ENCODE measurements at regions of chr12 and their contacts with region 1.

Region 1: DNA sequence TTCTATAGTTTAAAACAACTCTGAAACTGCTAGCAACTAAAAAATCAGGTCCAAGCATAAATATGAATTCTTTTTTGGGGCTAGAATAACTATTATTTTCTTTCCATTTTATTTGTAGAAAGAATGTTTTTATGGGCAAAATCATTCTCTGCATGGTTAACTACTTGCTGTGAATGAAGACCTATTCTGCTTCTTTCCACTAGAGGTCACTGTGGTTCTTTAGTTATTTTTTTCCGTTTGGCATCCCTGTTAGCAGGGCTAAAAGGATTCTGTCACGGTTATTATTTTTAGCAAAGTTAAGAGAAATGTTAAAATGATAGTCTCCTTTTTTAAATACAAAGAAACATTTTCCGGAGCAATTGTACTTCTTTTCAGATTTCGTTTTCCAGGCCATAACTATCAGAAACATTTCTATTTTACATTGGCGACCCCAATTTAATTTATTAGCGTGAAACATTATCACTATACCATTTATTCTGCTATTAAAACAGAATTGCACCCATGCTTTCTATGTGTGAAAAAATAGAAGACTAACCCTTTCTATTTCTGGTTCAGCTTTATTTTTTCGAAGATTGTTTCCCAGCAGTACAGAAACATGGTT is 404.8 kb downstream of the ATP23 start:
- DNase-seq: no peak
- ATAC-seq: peak; percentile 72; the same call in 1 of the 2 replicates
- H3K4me3 ChIP-seq: no peak overlapping the region
- H3K27ac ChIP-seq: peak overlapping the region; percentile 54; the same call in 1 of the 2 replicates
- H3K4me1 ChIP-seq: no peaks in the 10 kb centered on the region; the same call in 1 of the 2 replicates
- H3K27me3 ChIP-seq: no peaks in the 10 kb centered on the region
- CTCF ChIP-seq: peak; percentile 73; the same call in 1 of the 2 replicates

Region 2: DNA sequence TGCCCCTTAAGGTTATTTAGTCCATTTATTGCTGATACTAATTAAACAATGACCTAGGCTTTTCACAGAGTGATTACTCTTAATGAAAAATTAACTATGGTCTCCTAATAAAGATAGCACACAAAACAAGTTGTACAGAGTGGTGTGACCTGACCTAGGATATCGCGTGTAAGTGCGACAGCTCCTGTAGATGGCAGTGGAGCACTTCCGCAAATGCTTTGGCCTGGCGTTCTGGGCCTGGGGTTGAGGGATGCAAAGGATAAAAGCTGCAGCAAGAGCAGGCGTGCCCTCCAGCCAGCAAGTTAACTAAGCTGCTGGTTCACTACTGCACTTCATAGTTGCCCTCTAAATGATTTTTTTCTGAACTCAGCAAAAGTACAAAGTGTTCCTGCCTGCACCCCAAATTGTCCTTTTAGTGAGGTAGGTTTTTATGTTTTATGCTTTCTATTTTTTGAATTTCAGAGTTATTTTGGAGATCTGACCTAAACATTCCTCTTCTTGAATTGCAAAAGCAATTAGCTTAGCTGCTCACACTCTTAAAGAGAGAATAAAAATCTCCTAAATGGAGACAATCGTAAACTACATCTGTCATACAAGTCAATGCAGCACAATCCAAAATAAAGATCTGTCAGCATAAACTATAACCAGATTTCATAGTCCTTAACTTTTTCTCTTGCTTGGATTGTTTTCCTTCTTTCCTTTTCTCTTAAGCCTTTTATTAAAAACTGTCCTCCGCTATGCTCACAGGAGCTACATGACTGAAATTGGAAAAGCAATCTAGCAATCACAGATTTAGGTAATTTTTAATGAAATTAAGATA is 194.6 kb after region 1 on chr12:
- CTCF ChIA-PET with region 1: no interaction called
- POLR2A ChIA-PET with region 1: no interaction called
- in situ Hi-C with region 1: no loop called
- intact Hi-C with region 1: loop called (anchors 5 kb)
- DNase-seq: peak; percentile 70
- ATAC-seq: peak; percentile 98
- H3K4me3 ChIP-seq: no peak overlapping the region
- H3K27ac ChIP-seq: no peak overlapping the region; the same call in 1 of the 2 replicates
- H3K4me1 ChIP-seq: no peaks in the 10 kb centered on the region
- H3K27me3 ChIP-seq: no peaks in the 10 kb centered on the region
- CTCF ChIP-seq: peak; percentile 89

Region 3: DNA sequence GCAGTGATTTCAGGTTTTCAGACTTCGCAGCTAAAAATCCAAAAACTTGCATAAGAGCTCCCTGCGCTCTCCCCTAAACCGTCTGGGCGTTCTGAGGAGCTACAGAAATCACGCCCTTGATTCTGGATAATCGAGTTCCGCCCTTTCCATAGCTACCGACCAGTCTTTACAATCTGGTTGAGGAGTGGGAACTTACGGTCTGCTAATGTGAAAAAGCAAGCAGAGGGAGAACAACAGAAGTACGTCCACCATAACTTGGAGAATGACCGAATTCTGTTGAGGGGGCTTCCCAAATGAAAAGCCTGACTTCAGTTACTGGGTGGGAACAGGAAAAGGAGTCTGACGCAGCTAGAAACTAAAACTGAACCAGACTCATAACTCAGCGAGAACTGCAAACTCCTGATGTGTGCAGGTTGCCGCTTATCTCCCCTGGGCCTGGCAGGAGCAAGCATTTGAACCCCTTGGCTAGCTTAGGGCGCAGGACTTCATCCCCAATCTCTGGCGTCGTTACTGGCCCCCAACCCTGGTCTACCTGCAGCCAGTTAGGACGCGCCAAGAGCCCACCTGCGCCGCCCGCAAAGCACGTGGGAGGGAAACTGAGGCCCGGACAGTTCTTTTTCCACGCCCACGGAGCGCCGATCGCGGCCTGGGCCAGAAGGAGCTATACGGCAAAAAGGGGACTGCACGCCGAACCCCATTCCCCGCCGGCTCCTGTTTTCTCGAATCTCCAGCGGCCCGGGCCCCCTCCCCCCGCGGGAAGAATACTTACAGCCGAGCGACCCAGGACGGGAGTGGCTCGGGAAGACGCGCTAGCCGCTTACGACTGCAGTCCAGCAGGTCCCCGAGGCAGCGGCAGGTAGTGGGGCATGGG is 573.3 kb after region 1 on chr12:
- CTCF ChIA-PET with region 1: no interaction called
- POLR2A ChIA-PET with region 1: no interaction called
- in situ Hi-C with region 1: no loop called
- intact Hi-C with region 1: loop called (anchors 5 kb)
- DNase-seq: peak; percentile 33
- ATAC-seq: peak; percentile 60
- H3K4me3 ChIP-seq: peak overlapping the region; percentile 82 to 96
- H3K27ac ChIP-seq: peak overlapping the region; percentile 81
- H3K4me1 ChIP-seq: peaks cover 28% of the 10 kb centered on the region
- H3K27me3 ChIP-seq: no peaks in the 10 kb centered on the region; the same call in 1 of the 2 replicates
- CTCF ChIP-seq: no peak

Region 4: DNA sequence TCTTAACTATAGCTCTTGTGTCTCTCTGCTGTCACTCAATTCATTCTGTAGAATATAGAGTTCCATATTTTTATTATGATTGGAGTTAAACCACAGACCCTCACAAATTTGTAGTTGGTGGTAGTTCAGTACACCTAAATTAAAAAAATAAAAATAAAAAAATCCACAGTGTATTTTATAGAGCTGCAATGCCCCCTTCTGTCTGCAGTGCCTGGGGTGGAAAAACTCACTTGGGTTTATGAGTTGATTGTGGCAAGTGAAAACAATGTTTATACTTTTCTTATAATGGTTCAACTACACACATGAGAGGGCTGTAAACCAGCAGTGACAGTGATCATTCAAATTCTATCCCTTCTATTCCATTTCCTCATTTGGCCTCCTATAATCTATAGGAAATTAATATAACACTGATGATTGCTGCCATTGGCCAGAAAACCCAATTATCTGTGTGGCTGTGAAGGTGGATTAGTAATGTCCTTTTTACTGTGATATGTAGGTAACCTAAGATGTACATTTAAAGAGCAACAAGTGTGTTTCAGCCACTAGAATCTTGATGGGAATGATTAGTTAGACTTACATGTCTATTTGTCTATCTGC is 741.0 kb after region 1 on chr12:
- CTCF ChIA-PET with region 1: no interaction called
- POLR2A ChIA-PET with region 1: no interaction called
- in situ Hi-C with region 1: no loop called
- intact Hi-C with region 1: loop called (anchors 10 kb)
- DNase-seq: no peak
- ATAC-seq: no peak
- H3K4me3 ChIP-seq: no peak overlapping the region
- H3K27ac ChIP-seq: no peak overlapping the region
- H3K4me1 ChIP-seq: no peaks in the 10 kb centered on the region
- H3K27me3 ChIP-seq: no peaks in the 10 kb centered on the region
- CTCF ChIP-seq: peak; percentile 50; the same call in 1 of the 2 replicates

Region 5: GRCh38 chr12:59149997-59150642 is 804.0 kb after region 1 on chr12:
- CTCF ChIA-PET with region 1: interaction called, 5 read pairs
- POLR2A ChIA-PET with region 1: no interaction called
- in situ Hi-C with region 1: no loop called
- intact Hi-C with region 1: loop called (anchors 5 kb)
- DNase-seq: peak; percentile 71
- ATAC-seq: peak; percentile 89
- H3K4me3 ChIP-seq: no peak overlapping the region
- H3K27ac ChIP-seq: no peak overlapping the region
- H3K4me1 ChIP-seq: no peaks in the 10 kb centered on the region
- H3K27me3 ChIP-seq: no peaks in the 10 kb centered on the region
- CTCF ChIP-seq: peak; percentile 77; the same call in 1 of the 2 replicates

Measured in Panc1 (cell line).